Right cardiac atrium (tissue), 5 donors: ENCODE measurements at regions of chr22 and their contacts with region 1.

Region 1: DNA sequence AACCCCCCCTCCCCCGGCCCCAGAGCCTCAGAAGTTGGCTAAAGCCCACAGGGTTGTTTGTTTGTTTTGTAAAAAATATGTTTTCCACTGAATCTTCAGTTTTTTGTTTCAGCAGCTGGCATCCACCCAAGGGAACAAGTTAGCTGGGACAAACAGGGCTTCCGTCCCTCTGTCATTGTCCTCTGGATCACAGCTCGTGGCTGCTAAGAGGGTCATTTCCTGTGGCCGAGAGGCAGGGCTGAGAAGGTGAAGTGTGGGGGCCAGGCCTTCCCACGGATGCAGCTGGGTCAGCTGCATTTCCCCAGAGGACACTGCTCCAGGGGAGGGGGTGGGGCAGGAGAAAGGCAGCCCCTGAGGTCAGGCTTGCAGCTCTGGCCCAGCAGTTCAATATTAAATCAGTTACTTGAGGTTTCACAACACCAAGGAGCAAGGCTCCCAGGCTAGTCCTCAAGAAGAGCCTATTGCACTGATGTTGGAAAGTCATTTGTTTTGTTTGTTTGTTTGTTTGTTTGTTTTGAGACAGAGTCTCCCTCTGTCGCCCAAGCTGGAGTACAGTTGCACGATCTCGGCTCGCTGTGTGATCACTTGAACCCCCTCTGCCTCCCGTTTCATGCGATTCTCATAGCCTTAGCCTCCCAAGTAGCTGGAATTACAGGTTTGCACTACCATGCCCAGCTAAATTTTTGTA is 34.4 kb upstream of the SMTN start:
- DNase-seq: peak; percentile 77 to 89 (median 81)
- ATAC-seq: peak; percentile 80 to 89
- H3K4me3 ChIP-seq: no peak overlapping the region
- H3K27ac ChIP-seq: peak overlapping the region; percentile 73
- H3K4me1 ChIP-seq: peaks cover 2% of the 10 kb centered on the region
- H3K27me3 ChIP-seq: no peaks in the 10 kb centered on the region

Region 2: DNA sequence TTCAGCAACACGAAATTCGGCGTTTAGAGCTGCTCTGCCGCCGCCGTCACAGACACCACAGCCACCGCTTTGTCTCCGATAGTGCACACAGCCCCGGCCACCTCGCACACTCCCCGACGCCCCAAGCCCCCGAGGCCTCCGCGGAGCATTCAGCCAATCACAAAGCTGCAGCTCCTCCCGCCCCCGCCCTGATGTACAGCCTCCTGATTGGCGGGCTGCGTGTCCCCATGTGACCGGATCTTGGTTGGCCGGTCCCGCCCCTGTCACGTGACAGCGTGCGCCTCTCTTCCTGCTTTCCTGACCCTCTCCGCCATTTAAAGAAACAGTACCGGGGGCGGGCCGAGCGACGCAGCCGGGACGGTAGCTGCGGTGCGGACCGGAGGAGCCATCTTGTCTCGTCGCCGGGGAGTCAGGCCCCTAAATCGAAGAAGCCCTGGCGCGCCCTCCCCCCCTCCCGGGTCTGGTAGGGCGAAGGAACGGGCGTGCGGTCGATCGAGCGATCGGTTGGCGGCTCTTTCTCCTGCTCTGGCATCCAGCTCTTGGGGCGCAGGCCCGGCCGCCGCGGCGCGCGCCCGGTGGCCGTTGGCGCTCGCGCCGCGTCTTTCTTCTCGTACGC is 77.7 kb before region 1 on chr22 and contains the start of gene TUG1:
- intact Hi-C with region 1: loop called in 1 of 4 experiments (anchors 10 kb)
- DNase-seq: peak; percentile 99 to 100 (median 99)
- ATAC-seq: peak; percentile 98
- H3K4me3 ChIP-seq: peak within 1 kb of the TSS; percentile 81
- H3K27ac ChIP-seq: peak within 1 kb of the TSS; percentile 81
- H3K4me1 ChIP-seq: peaks cover 5% of the 10 kb centered on the region
- H3K27me3 ChIP-seq: no peaks in the 10 kb centered on the region
- total RNA-seq, gene TUG1: 42.1 to 56.2 (median 47.3) TPM